Activated T-helper 1 cell treated with anti-CD3 and anti-CD28 coated beads, Interleukin-12 subunit alpha, Interleukin-12 subunit beta, Interleukin-2, Interleukin-4 antibody, amounts not matched to agents 30 ng/mL and 10 ng/mL and 1 ng/mL, durations not matched to agents 14 hours and 24 hours and 36 hours (primary cell): ENCODE measurements at regions of chr14 and their contacts with region 1.

Region 1: DNA sequence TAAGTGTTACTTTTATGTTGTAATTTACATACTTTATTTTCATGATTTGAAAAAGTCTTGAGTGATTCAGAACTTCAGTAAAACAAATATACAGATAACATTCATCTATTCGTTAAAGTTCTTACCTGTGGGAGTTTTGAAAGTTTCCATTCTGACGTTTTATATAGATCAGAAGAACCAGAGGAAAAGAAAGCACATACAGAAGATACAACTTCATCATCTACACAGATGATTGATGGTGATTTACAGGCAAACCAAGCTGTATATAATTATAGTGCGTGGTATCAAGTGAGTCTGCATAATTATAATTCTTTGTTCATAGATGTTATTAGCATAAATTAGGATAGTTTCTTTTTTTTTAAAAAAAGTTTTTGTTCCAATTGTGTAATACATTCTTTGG is 20.0 kb downstream of the FKBP3 start:
- DNase-seq: no peak
- H3K4me3 Mint-ChIP-seq: no peak overlapping the region
- H3K27ac Mint-ChIP-seq: peak overlapping the region; percentile 70
- H3K4me1 Mint-ChIP-seq: peaks cover 14% of the 10 kb centered on the region
- H3K27me3 Mint-ChIP-seq: no peaks in the 10 kb centered on the region

Region 2: GRCh38 chr14:45089813-45090212 is 24.5 kb before region 1 on chr14:
- intact Hi-C with region 1: loop called (anchors 1 kb)
- DNase-seq: no peak
- H3K4me3 Mint-ChIP-seq: peak overlapping the region; percentile 6
- H3K27ac Mint-ChIP-seq: peak overlapping the region; percentile 38
- H3K4me1 Mint-ChIP-seq: peaks cover 71% of the 10 kb centered on the region
- H3K27me3 Mint-ChIP-seq: no peaks in the 10 kb centered on the region

Region 3: GRCh38 chr14:45095143-45095542 is 19.2 kb before region 1 on chr14:
- intact Hi-C with region 1: loop called (anchors 1 kb)
- DNase-seq: no peak
- H3K4me3 Mint-ChIP-seq: no peak overlapping the region
- H3K27ac Mint-ChIP-seq: no peak overlapping the region
- H3K4me1 Mint-ChIP-seq: peaks cover 32% of the 10 kb centered on the region
- H3K27me3 Mint-ChIP-seq: no peaks in the 10 kb centered on the region